ENCODE measurements at regions of chr19 and their contacts with region 1.

Region 1: DNA sequence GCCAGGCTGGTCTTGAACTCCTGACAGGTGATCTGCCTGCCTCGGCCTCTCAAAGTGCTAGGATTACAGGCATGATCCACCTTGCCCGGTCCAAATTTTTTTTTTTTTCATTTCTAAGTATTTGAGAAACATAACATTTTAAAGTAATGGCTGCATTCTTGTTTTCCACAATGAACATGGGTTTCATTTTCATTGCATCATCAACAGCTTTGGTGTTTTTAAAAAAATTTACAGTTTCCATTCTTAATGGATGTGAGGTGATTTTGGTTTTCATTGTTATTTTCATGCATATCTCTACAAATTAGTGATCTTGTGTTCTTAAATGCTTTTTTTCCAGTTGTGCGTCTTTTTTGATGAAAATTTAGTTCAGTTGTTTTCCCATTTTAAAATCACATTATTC is 27.5 kb downstream of the ZNF429 start:
- DNase-seq: no peak
- H3K4me3 ChIP-seq: no peak overlapping the region
- H3K27me3 ChIP-seq: no peaks in the 10 kb centered on the region
- CTCF ChIP-seq: no peak

Region 2: GRCh38 chr19:20423381-20424197 is 1109.3 kb before region 1 on chr19:
- CTCF ChIA-PET with region 1: no interaction called
- POLR2A ChIA-PET with region 1: interaction called, 13 read pairs
- DNase-seq: no peak
- H3K4me3 ChIP-seq: peak overlapping the region; percentile 67
- H3K27me3 ChIP-seq: no peaks in the 10 kb centered on the region
- CTCF ChIP-seq: no peak

Region 3: DNA sequence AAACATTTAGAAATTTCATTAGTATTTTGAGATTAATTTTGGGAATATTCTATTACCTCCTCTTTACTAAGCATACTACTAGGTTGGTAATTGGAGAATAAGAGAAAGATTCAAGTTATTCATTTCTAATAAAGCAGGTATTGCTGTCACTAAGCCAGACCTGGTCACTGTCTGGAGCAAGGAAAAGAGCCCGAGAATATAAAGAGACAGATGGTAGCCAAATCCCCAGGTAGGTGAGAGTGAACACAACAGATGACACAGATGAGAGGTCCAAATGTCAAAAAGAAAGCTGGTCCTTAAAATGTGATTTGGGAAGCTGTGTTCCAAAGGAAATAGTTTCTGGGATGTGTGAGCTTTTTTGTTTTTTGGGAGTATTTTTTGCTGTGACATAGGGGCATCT is 105.9 kb after region 1 on chr19:
- CTCF ChIA-PET with region 1: no interaction called
- POLR2A ChIA-PET with region 1: no interaction called
- DNase-seq: no peak
- H3K4me3 ChIP-seq: no peak overlapping the region
- H3K27me3 ChIP-seq: no peaks in the 10 kb centered on the region
- CTCF ChIP-seq: no peak

Measured in BJ (cell line).